GM13976 (cell line): ENCODE measurements at regions of chr14 and their contacts with region 1.

Region 1: GRCh38 chr14:75577729-75578101 is 705 bp upstream of the FLVCR2 start:
- DNase-seq: peak; percentile 89
- CTCF ChIP-seq: peak; percentile 78

Region 2: DNA sequence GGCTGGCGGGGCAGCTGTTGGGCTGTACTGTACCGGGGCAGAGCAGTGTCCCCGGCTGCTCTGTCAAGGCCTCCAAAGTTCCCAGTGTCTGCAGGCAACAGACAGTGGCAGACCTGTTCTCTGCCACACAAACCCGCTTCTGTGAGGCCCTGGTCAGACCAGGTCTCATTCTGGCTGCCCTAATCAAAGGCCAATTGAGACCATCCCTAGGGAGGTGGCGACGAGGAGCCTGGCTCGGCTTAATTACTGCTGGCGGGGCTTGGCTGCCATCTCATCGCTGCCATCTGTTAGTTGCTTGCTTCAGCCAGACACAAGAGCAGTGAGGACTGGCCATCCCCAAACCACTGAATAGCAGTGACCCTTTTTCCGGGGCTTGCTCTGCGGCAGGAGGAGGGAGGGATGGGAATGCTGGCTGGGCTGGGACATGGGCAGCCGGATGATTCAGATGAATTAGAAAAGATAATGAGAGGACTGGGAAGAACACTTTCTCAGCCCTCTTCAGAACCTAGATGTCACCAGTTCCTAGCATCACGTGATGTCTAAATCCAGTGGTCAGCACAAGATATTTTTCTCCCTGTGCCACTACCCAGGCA is 58.5 kb after region 1 on chr14:
- in situ Hi-C with region 1: loop called (anchors 10 kb)
- DNase-seq: no peak
- CTCF ChIP-seq: no peak

Region 3: DNA sequence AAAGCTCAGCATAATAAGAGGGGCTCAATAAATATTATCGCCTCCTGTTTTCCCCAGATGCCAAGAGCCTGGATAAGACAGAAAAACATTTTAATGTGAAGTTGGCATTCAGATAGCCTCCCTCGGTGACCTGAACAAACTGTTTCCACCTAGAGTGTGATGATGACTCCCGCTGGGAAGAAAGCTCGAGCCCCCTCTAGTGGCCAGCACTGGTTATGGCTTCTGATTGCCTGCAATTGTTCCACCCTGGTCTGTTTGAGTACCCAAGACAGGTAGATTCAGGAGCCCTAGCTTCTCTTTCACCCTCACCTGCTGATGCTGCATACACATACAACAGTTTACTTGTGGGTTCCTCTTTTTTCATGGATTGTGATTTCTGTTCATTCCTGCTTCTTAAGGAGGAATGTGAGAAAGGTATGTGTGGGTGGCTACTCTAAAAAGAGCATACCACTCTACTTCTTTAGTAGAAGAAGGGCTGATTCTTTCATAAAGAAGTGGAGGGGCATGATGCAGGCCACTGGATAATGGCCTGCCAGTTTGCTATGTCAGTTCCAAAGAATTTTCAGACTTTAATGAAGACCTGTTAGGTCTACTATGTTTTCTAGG is 76.5 kb after region 1 on chr14:
- in situ Hi-C with region 1: loop called (anchors 5 kb)
- DNase-seq: peak; percentile 78
- CTCF ChIP-seq: peak; percentile 89

Region 4: GRCh38 chr14:75738192-75738591 is 160.5 kb after region 1 on chr14:
- in situ Hi-C with region 1: no loop called
- DNase-seq: no peak
- CTCF ChIP-seq: no peak

Region 5: DNA sequence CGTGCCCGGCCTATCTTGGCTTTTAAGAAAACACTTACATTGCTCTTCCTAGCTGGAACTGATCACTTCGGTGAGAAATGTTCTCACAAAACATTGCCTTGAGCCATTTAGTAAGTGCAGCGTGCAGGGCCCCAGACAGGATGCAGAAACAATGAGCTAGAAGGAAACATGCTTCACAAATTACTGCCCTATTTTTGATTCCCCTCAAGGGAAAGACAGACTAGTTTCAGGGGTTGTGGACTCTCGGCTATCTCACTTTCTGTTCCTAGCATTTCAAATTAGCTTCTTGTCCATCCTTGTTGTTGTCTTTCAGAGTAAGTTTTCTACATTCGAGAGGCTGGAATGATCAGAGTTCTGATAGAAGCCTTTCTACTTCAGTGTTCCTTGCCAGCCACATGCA is 382.5 kb after region 1 on chr14:
- in situ Hi-C with region 1: no loop called
- DNase-seq: peak; percentile 73
- CTCF ChIP-seq: no peak